ENCODE measurements at regions of chr1 and their contacts with region 1.

Region 1: GRCh38 chr1:229897501-229897900 is 169.5 kb upstream of the GALNT2 start:
- DNase-seq: no peak
- H3K4me3 Mint-ChIP-seq: no peak overlapping the region
- H3K27ac Mint-ChIP-seq: no peak overlapping the region
- H3K4me1 Mint-ChIP-seq: peaks cover 5% of the 10 kb centered on the region
- H3K27me3 Mint-ChIP-seq: peaks cover 15% of the 10 kb centered on the region
- CTCF ChIP-seq: no peak

Region 2: DNA sequence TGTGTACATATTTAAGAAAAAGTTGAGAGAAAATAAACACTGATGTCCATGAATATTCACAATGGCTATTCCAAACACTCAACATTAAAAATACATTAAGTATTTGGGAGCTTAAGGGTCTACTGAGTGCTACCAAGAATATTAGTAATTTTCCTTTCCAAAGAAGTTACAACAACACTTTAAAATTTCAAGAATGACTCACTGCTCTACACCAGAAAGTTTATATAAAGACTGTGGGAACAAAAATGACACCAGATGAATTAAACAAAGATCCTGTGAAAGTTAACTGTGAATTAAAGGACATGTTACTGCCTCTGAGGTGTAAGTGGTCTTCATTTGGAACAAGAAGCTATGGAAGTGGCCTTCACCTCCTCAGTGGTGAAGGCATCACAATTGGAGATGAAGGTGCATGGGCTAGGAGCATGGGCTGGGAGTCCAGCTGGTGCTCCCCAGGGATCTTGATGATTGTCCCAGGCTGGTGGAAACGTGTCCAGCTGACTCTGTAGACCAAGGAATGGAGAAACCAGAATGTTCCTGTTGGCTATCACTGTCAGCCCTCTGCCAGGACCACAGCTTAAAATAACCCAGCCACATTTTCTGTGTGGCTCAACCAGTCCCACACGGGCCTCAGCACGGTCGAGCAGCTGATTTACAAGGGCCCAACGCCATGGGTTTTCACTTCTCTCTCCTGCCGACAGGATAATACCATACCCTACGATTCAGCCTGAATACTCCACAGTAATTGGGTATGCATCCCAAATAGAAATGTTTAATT is 300.4 kb before region 1 on chr1:
- CTCF ChIA-PET with region 1: no interaction called
- POLR2A ChIA-PET with region 1: no interaction called
- intact Hi-C with region 1: no loop called
- DNase-seq: peak; percentile 34
- H3K4me3 Mint-ChIP-seq: no peak overlapping the region
- H3K27ac Mint-ChIP-seq: peak overlapping the region; percentile 57
- H3K4me1 Mint-ChIP-seq: peaks cover 30% of the 10 kb centered on the region
- H3K27me3 Mint-ChIP-seq: no peaks in the 10 kb centered on the region
- CTCF ChIP-seq: no peak

Region 3: DNA sequence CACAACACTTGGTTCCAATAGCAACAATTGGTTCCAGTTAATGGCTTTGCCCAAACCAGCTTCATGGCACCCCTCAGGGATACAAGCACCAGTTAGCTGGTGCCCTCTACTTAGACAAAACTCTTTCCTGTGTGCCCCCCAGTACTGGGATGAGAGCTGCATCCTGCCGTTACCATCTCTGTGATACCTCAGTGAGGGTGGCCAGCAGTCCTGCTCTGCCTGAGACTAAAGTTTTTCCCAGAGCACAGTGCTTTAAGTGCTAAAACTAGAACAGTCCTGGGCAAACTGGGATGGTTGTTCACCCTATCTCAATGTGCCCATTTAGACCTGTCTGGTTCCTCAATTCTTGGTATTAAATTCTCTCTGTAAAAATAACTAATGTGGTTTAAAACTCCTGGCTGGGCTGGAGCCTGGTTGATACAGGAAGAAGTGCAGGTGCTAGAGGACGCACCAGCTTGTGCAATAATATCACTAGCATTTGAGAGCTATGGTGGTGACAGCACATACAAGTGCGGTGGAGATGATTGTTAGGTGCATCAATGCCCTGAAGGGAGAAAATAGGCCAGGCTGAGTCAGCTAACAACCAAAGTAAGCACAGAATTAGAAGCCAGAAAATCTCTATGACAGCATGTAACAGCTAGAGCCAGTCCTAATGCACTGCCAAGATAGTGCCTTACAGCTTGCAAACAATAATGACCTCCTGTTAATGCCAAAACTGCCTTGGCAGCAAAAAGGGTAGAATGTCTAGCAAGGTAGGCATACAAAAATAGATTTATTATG is 10.3 kb before region 1 on chr1:
- CTCF ChIA-PET with region 1: interaction called, 6 read pairs
- POLR2A ChIA-PET with region 1: interaction called, 25 read pairs
- intact Hi-C with region 1: no loop called
- DNase-seq: peak; percentile 97
- H3K4me3 Mint-ChIP-seq: no peak overlapping the region
- H3K27ac Mint-ChIP-seq: peak overlapping the region; percentile 71
- H3K4me1 Mint-ChIP-seq: peaks cover 30% of the 10 kb centered on the region
- H3K27me3 Mint-ChIP-seq: peaks cover 8% of the 10 kb centered on the region
- CTCF ChIP-seq: no peak

Region 4: GRCh38 chr1:229952670-229953520 is 55.4 kb after region 1 on chr1:
- CTCF ChIA-PET with region 1: no interaction called
- POLR2A ChIA-PET with region 1: interaction called, 4 read pairs
- intact Hi-C with region 1: loop called (anchors 5 kb)
- DNase-seq: no peak
- H3K4me3 Mint-ChIP-seq: no peak overlapping the region
- H3K27ac Mint-ChIP-seq: peak overlapping the region; percentile 29
- H3K4me1 Mint-ChIP-seq: peaks cover 15% of the 10 kb centered on the region
- H3K27me3 Mint-ChIP-seq: no peaks in the 10 kb centered on the region
- CTCF ChIP-seq: no peak

Region 5: DNA sequence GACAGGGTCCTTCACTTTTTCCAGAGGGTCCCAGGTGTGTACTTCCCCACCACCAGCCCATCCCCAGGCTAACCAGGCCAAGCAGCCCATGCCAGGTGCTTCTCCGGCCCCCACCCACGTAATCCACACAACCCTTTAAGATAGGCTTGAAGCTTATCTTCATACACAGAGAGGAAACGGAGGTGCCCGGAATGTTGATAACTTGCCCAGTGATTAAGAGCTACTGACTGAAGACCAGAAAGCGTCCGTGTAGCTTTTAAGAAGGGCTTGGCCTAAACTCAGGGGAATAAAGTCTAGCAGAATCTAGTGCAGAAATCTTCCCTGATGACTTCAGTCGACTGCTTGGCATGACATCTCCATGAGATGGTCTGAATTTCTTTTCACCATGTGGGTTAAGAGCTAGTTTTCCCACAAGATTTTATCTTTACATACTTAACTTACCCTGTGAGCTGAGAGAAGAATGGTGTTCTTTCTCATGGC is 308.3 kb after region 1 on chr1:
- CTCF ChIA-PET with region 1: no interaction called
- POLR2A ChIA-PET with region 1: no interaction called
- intact Hi-C with region 1: no loop called
- DNase-seq: no peak
- H3K4me3 Mint-ChIP-seq: no peak overlapping the region
- H3K27ac Mint-ChIP-seq: no peak overlapping the region
- H3K4me1 Mint-ChIP-seq: peaks cover 11% of the 10 kb centered on the region
- H3K27me3 Mint-ChIP-seq: no peaks in the 10 kb centered on the region
- CTCF ChIP-seq: no peak

Measured in MCF 10A (cell line).